ENCODE measurements at regions of chr11 and their contacts with region 1.

Region 1: DNA sequence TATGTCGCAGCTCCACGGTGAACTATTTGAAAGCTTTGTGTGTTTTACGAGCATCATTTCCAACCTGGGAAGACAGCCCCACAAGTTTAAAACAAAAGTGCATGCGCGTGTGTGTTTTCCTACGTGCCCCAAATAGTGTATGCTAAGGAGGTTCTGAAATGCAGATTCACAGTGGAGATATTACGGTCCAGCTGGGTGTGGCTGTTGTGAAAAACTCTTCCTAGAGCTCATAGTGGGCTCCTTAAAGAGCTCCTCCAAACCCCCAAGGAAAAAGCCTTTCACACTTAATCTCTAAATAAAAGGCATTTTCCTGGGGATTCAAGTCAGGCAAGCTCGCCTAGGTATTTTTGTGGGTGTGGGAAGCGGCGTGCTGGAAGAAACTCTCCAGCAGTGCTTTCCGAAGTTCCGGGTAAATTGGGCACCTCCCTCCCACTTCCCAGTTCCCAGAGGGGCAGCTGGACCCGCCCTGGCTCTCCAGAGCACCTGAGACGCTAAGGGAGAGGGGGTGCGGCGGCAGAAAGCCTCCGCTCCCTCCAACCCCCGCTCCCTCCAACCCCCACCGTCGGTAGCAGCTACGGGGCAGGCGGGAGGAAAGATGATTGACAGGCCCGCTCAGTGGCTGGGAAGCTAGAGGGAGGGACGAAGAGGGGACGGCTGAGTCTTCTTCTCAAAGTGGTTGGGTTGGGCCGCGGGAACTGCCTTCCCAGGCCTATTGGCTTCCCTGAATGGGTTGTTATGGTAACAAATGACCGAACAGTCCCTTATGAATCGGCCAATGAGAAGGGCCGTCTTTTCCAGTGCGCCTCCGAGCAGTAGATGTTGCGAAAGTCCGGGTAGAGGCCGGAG is 558 bp upstream of the PCF11 start:
- DNase-seq: peak; percentile 98 to 99
- ATAC-seq: peak; percentile 89 to 96 (median 92)
- H3K4me3 ChIP-seq: peak overlapping the region; percentile 94
- H3K27ac ChIP-seq: peak overlapping the region; percentile 95
- H3K4me1 ChIP-seq: peaks cover 17% of the 10 kb centered on the region
- H3K27me3 ChIP-seq: no peaks in the 10 kb centered on the region
- CTCF ChIP-seq: no peak

Region 2: DNA sequence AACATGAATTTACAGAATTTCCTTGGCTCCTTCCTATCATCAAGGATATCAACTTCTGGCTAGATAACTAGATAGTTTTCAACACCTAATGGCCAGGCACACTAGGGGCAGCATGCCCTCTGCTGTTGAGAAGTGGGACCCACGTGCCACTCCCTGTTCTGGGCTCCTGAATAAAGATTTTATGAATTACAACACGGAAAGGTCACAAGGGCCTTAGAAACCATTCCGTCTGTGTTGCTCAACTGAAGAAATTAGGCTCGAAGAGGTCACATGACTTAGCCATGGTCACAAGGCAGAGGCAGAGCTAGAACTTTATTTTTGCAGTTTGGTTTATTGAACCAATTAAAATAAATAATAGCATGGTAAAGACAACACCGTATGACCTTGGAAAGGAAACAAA is 292.1 kb before region 1 on chr11:
- intact Hi-C with region 1: no loop called
- DNase-seq: peak; percentile 44 to 78
- ATAC-seq: peak; percentile 62 to 93 (median 80)
- H3K4me3 ChIP-seq: no peak overlapping the region
- H3K27ac ChIP-seq: no peak overlapping the region
- H3K4me1 ChIP-seq: peaks cover 9% of the 10 kb centered on the region
- H3K27me3 ChIP-seq: no peaks in the 10 kb centered on the region
- CTCF ChIP-seq: peak; percentile 44

Region 3: GRCh38 chr11:82900277-82901164 is 255.9 kb before region 1 on chr11 and contains the start of gene PRCP:
- intact Hi-C with region 1: loop called (anchors 2 to 5 kb)
- DNase-seq: peak; percentile 92 to 95
- ATAC-seq: peak; percentile 91 to 93 (median 92)
- H3K4me3 ChIP-seq: peak within 1 kb of the TSS; percentile 84
- H3K27ac ChIP-seq: peak within 1 kb of the TSS; percentile 88
- H3K4me1 ChIP-seq: peaks cover 10% of the 10 kb centered on the region
- H3K27me3 ChIP-seq: no peaks in the 10 kb centered on the region
- CTCF ChIP-seq: no peak
- total RNA-seq, gene PRCP: 11.5 to 23.5 (median 15.2) TPM

Region 4: GRCh38 chr11:83007909-83008580 is 148.3 kb before region 1 on chr11:
- intact Hi-C with region 1: loop called in 1 of 2 experiments (anchors 5 kb)
- DNase-seq: peak; percentile 41 to 66
- ATAC-seq: peak; percentile 34 to 52 (median 42)
- H3K4me3 ChIP-seq: no peak overlapping the region
- H3K27ac ChIP-seq: peak overlapping the region; percentile 17
- H3K4me1 ChIP-seq: peaks cover 76% of the 10 kb centered on the region
- H3K27me3 ChIP-seq: no peaks in the 10 kb centered on the region
- CTCF ChIP-seq: no peak

Region 5: DNA sequence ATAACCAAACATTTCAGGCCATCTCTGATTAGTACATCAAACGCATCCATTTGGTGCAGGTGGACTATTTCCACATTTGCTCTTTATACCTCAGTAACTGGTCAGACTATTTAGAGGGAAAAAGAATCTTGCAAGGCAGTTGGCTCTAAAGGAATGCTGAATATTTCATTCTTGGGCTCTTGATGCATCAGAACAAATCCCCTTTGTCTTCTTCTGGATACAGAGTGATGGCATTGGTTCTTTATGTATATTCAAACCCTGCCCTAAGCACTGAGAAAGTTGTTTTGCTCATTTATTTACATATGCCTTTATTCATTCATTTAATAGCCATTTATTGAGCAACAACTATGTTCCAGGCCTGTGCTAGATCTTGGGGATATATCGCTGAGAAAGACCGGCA is 53.5 kb before region 1 on chr11:
- intact Hi-C with region 1: loop called in 1 of 2 experiments (anchors 5 kb)
- DNase-seq: no peak
- ATAC-seq: no peak
- H3K4me3 ChIP-seq: no peak overlapping the region
- H3K27ac ChIP-seq: no peak overlapping the region
- H3K4me1 ChIP-seq: no peaks in the 10 kb centered on the region
- H3K27me3 ChIP-seq: no peaks in the 10 kb centered on the region
- CTCF ChIP-seq: no peak

Region 6: DNA sequence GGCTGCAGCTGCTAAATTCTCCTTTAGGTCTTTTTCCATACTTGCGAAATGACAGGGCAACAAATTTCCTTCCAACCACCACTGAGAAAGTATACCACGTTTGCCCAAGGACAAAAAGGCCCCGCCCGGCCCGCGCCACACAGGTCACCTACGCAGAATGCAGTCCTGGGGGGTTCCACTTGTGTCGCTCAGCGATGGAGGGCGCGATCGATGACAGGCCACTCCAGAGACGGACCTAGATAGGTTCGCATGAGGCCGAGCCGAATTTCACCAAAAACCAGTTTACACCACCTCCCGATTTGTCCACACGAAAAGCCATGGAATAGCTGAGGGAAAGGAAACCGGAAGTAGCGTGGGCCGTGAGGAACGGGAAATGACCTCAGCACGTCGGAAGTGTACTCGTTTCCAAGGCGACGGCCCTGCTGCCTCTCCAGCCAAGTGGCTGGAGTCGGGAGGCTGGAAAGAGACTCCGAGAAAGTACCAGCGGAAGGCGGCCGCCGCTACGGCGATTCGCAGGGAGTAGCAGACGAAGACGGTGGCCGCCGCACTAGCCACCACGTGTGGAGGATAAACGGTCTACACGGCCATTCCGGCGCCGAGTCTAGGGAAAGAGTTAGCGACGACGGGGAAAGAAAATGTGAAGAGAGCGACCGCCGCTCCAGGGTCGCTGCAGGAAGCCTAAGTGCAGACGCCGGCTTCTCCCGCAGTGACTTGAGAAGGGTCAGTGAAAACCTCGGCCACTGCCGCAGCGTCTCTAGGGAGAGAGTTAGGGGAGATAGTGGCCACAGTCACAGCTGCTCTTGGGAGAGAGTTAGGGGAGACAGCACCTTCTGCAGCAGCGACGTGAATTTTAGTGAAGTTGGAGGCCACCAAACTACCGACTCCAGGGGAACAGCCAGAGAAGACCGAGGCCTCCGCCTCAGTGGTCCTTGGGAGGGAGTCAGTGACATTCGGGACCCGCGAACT is 37.2 kb after region 1 on chr11 and contains the start of gene ANKRD42:
- intact Hi-C with region 1: loop called (anchors 5 kb)
- DNase-seq: peak; percentile 91 to 96
- ATAC-seq: peak; percentile 96 to 98 (median 97)
- H3K4me3 ChIP-seq: peak within 1 kb of the TSS; percentile 86
- H3K27ac ChIP-seq: peak within 1 kb of the TSS; percentile 88
- H3K4me1 ChIP-seq: peaks cover 22% of the 10 kb centered on the region
- H3K27me3 ChIP-seq: no peaks in the 10 kb centered on the region
- CTCF ChIP-seq: no peak
- total RNA-seq, gene ANKRD42: 3.6 to 4.6 (median 3.7) TPM

Measured in psoas muscle (tissue), 8 donors.